Activated CD8-positive, alpha-beta T cell treated with anti-CD3 and anti-CD28 coated beads for 36 hours (primary cell): ENCODE measurements at regions of chr3 and their contacts with region 1.

Region 1: GRCh38 chr3:114299421-114299820 is 5.6 kb downstream of the TIGIT start:
- DNase-seq: peak; percentile 51
- ATAC-seq: peak; percentile 40
- H3K4me3 Mint-ChIP-seq: peak overlapping the region; percentile 63
- H3K27ac Mint-ChIP-seq: peak overlapping the region; percentile 82
- H3K4me1 Mint-ChIP-seq: peaks cover 27% of the 10 kb centered on the region
- H3K27me3 Mint-ChIP-seq: no peaks in the 10 kb centered on the region
- CTCF ChIP-seq: no peak

Region 2: GRCh38 chr3:114274929-114275328 is 24.5 kb before region 1 on chr3:
- CTCF ChIA-PET with region 1: no interaction called
- POLR2A ChIA-PET with region 1: no interaction called
- intact Hi-C with region 1: no loop called
- DNase-seq: no peak
- ATAC-seq: peak; percentile 34
- H3K4me3 Mint-ChIP-seq: no peak overlapping the region
- H3K27ac Mint-ChIP-seq: peak overlapping the region; percentile 25
- H3K4me1 Mint-ChIP-seq: peaks cover 7% of the 10 kb centered on the region
- H3K27me3 Mint-ChIP-seq: no peaks in the 10 kb centered on the region
- CTCF ChIP-seq: no peak

Region 3: GRCh38 chr3:114336122-114336697 is 36.8 kb after region 1 on chr3:
- CTCF ChIA-PET with region 1: interaction called, 11 read pairs
- POLR2A ChIA-PET with region 1: interaction called, 3 read pairs
- intact Hi-C with region 1: loop called (anchors 5 kb)
- DNase-seq: no peak
- ATAC-seq: no peak
- H3K4me3 Mint-ChIP-seq: no peak overlapping the region
- H3K27ac Mint-ChIP-seq: peak overlapping the region; percentile 97
- H3K4me1 Mint-ChIP-seq: peaks cover 59% of the 10 kb centered on the region
- H3K27me3 Mint-ChIP-seq: no peaks in the 10 kb centered on the region
- CTCF ChIP-seq: peak; percentile 66

Region 4: GRCh38 chr3:114350271-114350670 is 50.9 kb after region 1 on chr3:
- CTCF ChIA-PET with region 1: no interaction called
- POLR2A ChIA-PET with region 1: no interaction called
- intact Hi-C with region 1: no loop called
- DNase-seq: no peak
- ATAC-seq: no peak
- H3K4me3 Mint-ChIP-seq: no peak overlapping the region
- H3K27ac Mint-ChIP-seq: no peak overlapping the region
- H3K4me1 Mint-ChIP-seq: peaks cover 7% of the 10 kb centered on the region
- H3K27me3 Mint-ChIP-seq: no peaks in the 10 kb centered on the region
- CTCF ChIP-seq: no peak